CD4-positive, alpha-beta memory T cell (primary cell): ENCODE measurements at regions of chr20 and their contacts with region 1.

Region 1: DNA sequence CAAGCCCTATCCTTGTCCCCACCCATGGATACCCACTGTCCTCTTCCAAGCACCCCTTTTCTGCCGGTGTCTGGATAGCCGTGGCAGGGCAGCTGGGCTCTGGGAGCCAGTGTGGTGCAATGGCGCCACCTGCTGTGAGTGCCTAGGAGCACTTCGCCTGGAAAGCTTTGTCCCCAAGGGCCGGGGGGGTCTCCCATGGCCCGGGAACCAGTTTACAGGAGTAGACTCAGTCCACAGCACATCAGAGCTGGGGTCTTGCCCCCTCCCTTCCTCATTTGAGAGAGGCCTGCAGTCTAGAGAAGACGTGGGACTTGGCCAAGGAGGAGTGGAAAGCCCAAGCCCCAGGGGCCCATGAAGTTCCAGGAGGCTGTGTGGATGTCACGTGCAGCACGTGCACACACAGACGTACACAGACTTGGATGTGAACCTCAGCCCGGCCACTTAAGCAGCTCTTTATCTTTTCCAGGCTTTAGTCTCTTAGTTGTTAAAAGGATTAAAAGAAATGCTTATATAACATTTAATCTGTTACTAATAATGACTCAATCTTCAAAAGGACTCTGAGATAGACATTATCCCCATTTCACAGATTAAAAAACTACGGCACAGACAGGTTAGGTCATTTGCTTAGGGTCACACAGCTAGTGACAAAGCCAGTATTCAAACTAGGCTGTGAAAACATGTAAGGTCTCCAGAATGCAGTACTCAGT is 40.9 kb upstream of the CDH22 start:
- DNase-seq: peak in 4 of 5 donors; percentile 30 to 42 (median 36)
- H3K4me3 ChIP-seq: no peak overlapping the region
- H3K4me3 Mint-ChIP-seq: no peak overlapping the region
- H3K27ac ChIP-seq: no peak overlapping the region
- H3K27ac Mint-ChIP-seq: peak overlapping the region in 5 of 7 donors; percentile 9 to 82 (median 46)
- H3K4me1 ChIP-seq: peaks cover 5% of the 10 kb centered on the region
- H3K4me1 Mint-ChIP-seq: peaks cover 15 to 37% (median 21%) of the 10 kb centered on the region in 4 donors
- H3K27me3 ChIP-seq: no peaks in the 10 kb centered on the region
- H3K27me3 Mint-ChIP-seq: no peaks in the 10 kb centered on the region

Region 2: DNA sequence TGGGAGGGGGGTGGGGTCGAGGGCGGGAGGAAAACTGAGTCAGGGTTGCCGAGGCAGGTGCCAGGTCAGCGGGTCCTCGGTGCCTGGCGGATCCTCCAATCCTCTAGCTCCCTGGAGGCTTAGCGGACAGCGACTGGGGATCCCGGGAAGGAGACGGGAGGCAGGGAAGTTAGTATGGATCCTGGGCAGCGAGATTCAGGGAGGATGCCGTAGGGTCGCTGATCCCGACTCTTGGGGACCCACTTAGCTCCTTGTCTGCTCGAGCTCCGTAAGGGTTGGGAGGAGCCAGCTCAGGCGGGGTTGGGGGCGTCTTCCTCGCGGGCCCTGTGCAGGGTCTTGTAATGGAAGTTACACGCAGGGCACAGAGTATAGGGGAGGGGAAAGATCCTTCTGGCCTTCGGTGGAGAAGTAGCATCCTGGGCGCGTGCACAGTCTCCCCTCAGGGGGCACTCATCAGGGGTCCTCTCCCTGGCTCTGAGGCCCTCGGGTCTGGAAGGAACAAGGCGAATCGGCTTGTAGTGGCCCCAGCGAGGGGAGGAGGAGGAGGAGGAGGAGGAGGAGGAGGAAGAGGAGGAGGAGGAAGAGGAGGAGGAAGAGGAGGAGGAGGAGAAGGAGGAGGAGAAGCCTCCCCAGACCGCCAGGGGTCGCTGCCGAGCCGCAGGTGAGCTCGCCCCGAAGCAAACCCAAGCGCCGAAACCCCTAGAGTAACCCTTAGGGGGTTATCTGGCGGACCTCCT is 326.6 kb before region 1 on chr20:
- CTCF ChIA-PET with region 1: interaction called, 3 read pairs
- POLR2A ChIA-PET with region 1: no interaction called
- intact Hi-C with region 1: loop called (anchors 2 kb)
- DNase-seq: peak; percentile 59 to 73 (median 62)
- H3K4me3 ChIP-seq: peak overlapping the region; percentile 19 to 57
- H3K4me3 Mint-ChIP-seq: peak overlapping the region; percentile 16 to 82 (median 64)
- H3K27ac ChIP-seq: no peak overlapping the region
- H3K27ac Mint-ChIP-seq: no peak overlapping the region
- H3K4me1 ChIP-seq: peaks cover 16% of the 10 kb centered on the region
- H3K4me1 Mint-ChIP-seq: peaks cover 10 to 30% (median 12%) of the 10 kb centered on the region in 4 donors
- H3K27me3 ChIP-seq: peaks cover 27% of the 10 kb centered on the region
- H3K27me3 Mint-ChIP-seq: peaks cover 25 to 48% of the 10 kb centered on the region in 2 donors

Region 3: DNA sequence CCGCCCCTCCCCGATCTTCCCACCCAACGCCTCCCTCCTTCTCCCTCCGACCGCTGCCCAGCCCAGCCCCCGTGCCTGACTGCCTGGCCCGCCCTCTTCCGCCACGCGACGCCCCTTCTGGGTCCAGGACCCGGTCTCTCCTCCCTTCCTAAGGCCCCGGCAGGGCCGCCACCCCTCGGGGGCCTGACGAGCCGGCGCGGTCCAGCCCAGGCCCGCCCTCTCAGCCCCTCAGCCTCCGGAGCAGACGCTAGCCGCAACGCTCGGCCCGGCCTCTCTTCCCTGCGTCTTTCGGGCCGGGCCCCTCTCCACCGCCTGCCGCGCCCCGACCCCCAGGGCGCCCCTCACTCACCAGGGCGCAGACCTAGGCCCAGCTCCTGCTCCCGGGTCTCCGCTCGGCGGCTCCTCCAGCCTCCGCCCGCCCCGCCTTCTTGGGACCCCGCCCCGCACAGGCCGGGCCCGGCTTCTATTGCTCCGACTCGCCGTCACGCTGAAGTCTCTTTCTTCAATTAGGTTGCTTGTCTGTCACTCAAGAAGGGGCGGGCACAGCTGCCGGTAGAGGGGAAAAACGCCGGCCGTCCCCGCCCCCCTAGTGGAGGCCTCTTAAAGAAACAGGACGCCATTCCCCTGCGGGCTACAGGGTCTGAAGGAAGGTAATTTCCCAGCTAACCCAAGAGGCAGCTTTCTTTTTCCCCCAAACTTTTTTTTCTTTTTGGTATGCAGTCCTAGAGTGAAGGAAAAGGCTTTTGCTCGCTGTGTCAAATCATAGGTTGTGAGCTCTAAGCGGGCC is 57.2 kb after region 1 on chr20 and contains the start of gene ELMO2:
- CTCF ChIA-PET with region 1: interaction called, 6 read pairs
- POLR2A ChIA-PET with region 1: interaction called, 17 read pairs
- intact Hi-C with region 1: no loop called
- DNase-seq: peak; percentile 94 to 98 (median 95)
- H3K4me3 ChIP-seq: peak within 1 kb of the TSS; percentile 64 to 73
- H3K4me3 Mint-ChIP-seq: peak within 1 kb of the TSS; percentile 91 to 99 (median 96)
- H3K27ac ChIP-seq: peak within 1 kb of the TSS; percentile 95
- H3K27ac Mint-ChIP-seq: peak within 1 kb of the TSS; percentile 96 to 99 (median 97)
- H3K4me1 ChIP-seq: peaks cover 63% of the 10 kb centered on the region
- H3K4me1 Mint-ChIP-seq: peaks cover 49 to 83% (median 66%) of the 10 kb centered on the region in 4 donors
- H3K27me3 ChIP-seq: no peaks in the 10 kb centered on the region
- H3K27me3 Mint-ChIP-seq: peaks cover 0 to 3% of the 10 kb centered on the region in 2 donors
- total RNA-seq, gene ELMO2: 65.1 to 70.7 TPM

Region 4: GRCh38 chr20:46430921-46431712 is 81.9 kb after region 1 on chr20:
- CTCF ChIA-PET with region 1: no interaction called
- POLR2A ChIA-PET with region 1: no interaction called
- intact Hi-C with region 1: no loop called
- DNase-seq: no peak
- H3K4me3 ChIP-seq: no peak overlapping the region
- H3K4me3 Mint-ChIP-seq: no peak overlapping the region
- H3K27ac ChIP-seq: no peak overlapping the region
- H3K27ac Mint-ChIP-seq: no peak overlapping the region
- H3K4me1 ChIP-seq: no peaks in the 10 kb centered on the region
- H3K4me1 Mint-ChIP-seq: no peaks in the 10 kb centered on the region
- H3K27me3 ChIP-seq: peaks cover 5% of the 10 kb centered on the region
- H3K27me3 Mint-ChIP-seq: peaks cover 30 to 37% of the 10 kb centered on the region in 2 donors